ENCODE measurements at regions of chrX and their contacts with region 1.

Region 1: DNA sequence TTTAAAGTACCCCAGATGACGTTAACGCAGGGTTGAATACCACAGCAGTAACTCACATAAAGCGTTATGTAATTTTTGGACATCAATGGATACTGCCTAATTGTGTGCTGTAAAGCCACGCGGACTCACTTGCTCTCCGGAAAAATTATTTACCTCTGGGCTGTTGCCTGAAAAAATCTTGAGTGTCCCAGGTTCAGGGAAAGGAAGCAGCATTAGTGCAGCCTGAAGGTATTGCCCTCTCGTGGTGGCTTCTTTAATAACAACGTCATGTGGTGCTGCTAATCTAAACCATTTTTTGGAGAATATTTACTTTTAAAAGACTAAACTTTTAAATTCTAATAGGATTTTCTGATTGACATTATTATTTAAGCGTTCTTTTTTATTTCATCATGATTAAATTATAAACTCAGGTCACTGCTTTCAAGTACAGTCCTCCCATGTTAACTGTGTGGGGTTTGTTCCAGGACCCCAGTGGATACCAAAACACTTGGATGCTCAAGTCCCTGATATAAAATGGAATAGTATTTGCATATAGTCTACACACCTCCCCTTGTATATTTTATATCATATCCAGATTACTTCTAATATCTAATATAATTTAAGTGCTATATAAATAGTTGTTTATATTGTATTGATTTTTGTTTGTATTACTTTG is 384.8 kb downstream of the FAM133A start:
- DNase-seq: no peak
- H3K4me3 Mint-ChIP-seq: no peak overlapping the region
- H3K27ac Mint-ChIP-seq: no peak overlapping the region
- H3K4me1 Mint-ChIP-seq: no peaks in the 10 kb centered on the region
- H3K27me3 Mint-ChIP-seq: no peaks in the 10 kb centered on the region

Region 2: GRCh38 chrX:93874554-93874953 is 184.3 kb before region 1 on chrX:
- CTCF ChIA-PET with region 1: no interaction called
- POLR2A ChIA-PET with region 1: no interaction called
- intact Hi-C with region 1: loop called (anchors 5 kb)
- DNase-seq: no peak
- H3K4me3 Mint-ChIP-seq: no peak overlapping the region
- H3K27ac Mint-ChIP-seq: no peak overlapping the region
- H3K4me1 Mint-ChIP-seq: no peaks in the 10 kb centered on the region
- H3K27me3 Mint-ChIP-seq: no peaks in the 10 kb centered on the region

Region 3: GRCh38 chrX:94097868-94098267 is 39.0 kb after region 1 on chrX:
- CTCF ChIA-PET with region 1: no interaction called
- POLR2A ChIA-PET with region 1: no interaction called
- intact Hi-C with region 1: no loop called
- DNase-seq: no peak
- H3K4me3 Mint-ChIP-seq: no peak overlapping the region
- H3K27ac Mint-ChIP-seq: no peak overlapping the region
- H3K4me1 Mint-ChIP-seq: no peaks in the 10 kb centered on the region
- H3K27me3 Mint-ChIP-seq: no peaks in the 10 kb centered on the region

Measured in activated CD4-positive, alpha-beta memory T cell treated with anti-CD3 and anti-CD28 coated beads for 36 hours (primary cell).